ENCODE measurements at regions of chr5 and their contacts with region 1.

Region 1: DNA sequence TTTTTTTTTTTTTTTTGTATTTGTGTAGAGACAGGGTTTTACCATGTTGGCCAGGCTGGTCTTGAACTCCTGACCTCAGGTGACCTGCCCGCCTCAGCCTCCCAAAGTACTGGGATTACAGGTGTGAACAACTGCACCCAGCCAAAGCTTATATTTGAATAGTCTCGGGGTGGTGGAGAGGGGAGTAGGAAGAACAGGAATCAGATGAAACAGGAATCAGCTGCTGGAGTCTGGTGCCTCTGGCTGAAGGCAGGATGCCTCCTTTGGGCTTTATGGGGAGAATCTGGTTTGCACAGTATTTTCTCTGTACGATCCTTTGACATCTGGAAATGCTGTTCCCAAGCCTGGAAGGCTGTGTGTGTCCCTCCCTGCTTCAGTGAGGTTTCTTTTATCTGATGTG is 10.9 kb downstream of the C5orf52 start:
- DNase-seq: no peak

Region 2: GRCh38 chr5:157350939-157351801 is 331.1 kb before region 1 on chr5:
- intact Hi-C with region 1: no loop called
- DNase-seq: no peak

Region 3: GRCh38 chr5:157710872-157711271 is 28.6 kb after region 1 on chr5:
- intact Hi-C with region 1: loop called in 1 of 2 experiments (anchors 2 kb)
- DNase-seq: no peak